OCI-LY7 (cell line): ENCODE measurements at regions of chr12 and their contacts with region 1.

Region 1: DNA sequence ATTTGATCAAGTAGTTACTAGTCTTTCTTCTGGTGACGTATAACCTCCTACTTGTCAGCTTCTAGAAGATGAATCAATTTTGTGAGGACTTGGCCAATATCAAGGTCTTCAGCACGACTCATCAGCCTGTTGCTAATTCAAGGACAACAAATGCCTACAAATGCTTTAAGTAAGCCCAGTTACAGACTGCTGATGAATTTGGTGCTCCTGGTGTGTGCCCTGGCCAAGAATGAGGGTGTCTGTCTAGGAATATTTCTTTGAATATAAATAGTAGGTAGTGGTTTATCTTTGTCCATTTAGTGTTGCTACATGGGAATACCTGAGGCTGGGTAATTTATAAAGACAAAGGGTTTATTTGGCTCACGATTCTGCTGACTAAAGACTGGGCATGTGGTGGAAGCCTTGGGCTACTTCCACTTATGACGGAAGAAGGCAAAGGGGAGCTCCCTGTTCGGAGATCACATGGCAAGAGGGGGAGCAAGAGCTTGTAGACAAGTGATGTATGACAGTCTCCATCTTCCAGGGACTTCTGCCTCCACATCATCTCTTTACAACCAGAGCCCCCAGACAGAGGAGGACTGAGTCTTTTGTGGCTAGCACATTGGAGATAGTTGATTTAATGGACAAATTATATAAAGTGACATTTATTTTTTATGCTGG is 180.2 kb downstream of the CRADD start:
- DNase-seq: no peak
- H3K4me3 ChIP-seq: no peak overlapping the region
- H3K27ac ChIP-seq: no peak overlapping the region
- H3K4me1 ChIP-seq: no peaks in the 10 kb centered on the region
- CTCF ChIP-seq: no peak

Region 2: GRCh38 chr12:93317227-93317626 is 540.2 kb before region 1 on chr12:
- CTCF ChIA-PET with region 1: no interaction called
- POLR2A ChIA-PET with region 1: no interaction called
- intact Hi-C with region 1: no loop called
- DNase-seq: no peak
- H3K4me3 ChIP-seq: no peak overlapping the region
- H3K27ac ChIP-seq: no peak overlapping the region
- H3K4me1 ChIP-seq: no peaks in the 10 kb centered on the region
- CTCF ChIP-seq: no peak

Region 3: GRCh38 chr12:93813972-93814821 is 43.2 kb before region 1 on chr12:
- CTCF ChIA-PET with region 1: no interaction called
- POLR2A ChIA-PET with region 1: no interaction called
- intact Hi-C with region 1: no loop called
- DNase-seq: no peak
- H3K4me3 ChIP-seq: no peak overlapping the region
- H3K27ac ChIP-seq: no peak overlapping the region
- H3K4me1 ChIP-seq: no peaks in the 10 kb centered on the region
- CTCF ChIP-seq: no peak

Region 4: GRCh38 chr12:93825931-93826555 is 31.4 kb before region 1 on chr12:
- CTCF ChIA-PET with region 1: no interaction called
- POLR2A ChIA-PET with region 1: no interaction called
- intact Hi-C with region 1: no loop called
- DNase-seq: no peak
- H3K4me3 ChIP-seq: no peak overlapping the region
- H3K27ac ChIP-seq: no peak overlapping the region
- H3K4me1 ChIP-seq: no peaks in the 10 kb centered on the region
- CTCF ChIP-seq: no peak

Region 5: DNA sequence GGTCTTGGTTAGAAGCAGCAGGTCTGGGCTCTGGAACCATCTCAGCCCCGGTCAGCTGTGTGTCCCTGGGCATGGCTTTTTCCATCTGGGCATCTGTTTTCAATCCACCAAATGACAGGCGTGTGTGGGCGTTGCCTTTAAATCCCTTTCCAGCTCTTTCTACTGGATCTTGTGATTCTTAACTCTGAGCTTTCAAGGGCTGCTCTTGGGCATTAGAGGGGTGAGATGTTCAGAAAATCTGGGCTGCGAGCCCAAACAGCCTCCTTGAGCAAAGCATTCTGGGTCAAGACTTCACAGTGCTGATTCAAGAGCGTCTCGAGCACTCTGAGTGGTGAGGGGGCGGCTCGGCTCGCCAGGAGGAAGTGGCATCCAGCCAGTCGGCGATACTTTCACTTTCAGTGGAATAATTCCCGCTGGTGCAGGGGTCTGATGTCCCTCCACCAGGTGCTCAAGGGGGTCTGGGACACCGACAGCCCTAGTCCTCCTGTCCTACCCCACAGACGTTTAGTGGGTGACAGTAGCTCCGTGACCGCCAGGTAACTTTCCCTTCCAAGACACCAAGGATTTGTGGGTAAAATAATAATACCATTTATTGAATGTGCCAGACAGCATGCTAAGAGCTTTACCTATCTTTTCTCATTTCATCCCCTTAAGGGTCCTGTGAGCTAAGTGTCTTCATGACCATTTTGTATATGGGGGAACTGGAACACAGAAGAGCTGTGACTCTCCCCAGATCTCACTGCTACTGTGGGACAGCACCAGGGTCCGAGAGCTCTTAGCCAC is 405.0 kb after region 1 on chr12:
- CTCF ChIA-PET with region 1: no interaction called
- POLR2A ChIA-PET with region 1: no interaction called
- intact Hi-C with region 1: loop called (anchors 10 kb)
- DNase-seq: peak; percentile 85
- H3K4me3 ChIP-seq: peak overlapping the region; percentile 68
- H3K27ac ChIP-seq: peak overlapping the region; percentile 24
- H3K4me1 ChIP-seq: peaks cover 44% of the 10 kb centered on the region
- CTCF ChIP-seq: no peak; the same call in 1 of the 2 replicates

Region 6: DNA sequence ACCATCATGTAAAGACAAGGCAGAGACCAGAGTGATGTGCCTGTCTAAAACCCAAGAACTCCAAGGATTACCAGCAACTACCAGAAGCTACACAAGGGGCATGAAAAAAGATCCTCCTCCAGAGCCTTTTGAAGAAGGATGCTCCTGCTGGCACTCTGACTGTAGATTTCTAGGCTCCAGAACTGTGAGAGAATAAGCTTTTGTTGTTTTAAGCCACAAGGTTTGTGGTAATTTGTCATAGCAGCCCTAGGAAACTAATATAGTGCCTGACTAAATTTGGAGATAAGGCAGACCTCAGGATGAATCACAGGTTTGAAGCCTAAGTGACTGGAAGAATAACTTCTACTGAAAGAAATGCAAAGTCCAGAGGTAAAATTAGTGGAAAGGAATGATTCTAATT is 469.3 kb after region 1 on chr12:
- CTCF ChIA-PET with region 1: no interaction called
- POLR2A ChIA-PET with region 1: no interaction called
- intact Hi-C with region 1: no loop called
- DNase-seq: no peak
- H3K4me3 ChIP-seq: no peak overlapping the region
- H3K27ac ChIP-seq: no peak overlapping the region
- H3K4me1 ChIP-seq: no peaks in the 10 kb centered on the region
- CTCF ChIP-seq: no peak